ENCODE measurements at regions of chr21 and their contacts with region 1.

Region 1: DNA sequence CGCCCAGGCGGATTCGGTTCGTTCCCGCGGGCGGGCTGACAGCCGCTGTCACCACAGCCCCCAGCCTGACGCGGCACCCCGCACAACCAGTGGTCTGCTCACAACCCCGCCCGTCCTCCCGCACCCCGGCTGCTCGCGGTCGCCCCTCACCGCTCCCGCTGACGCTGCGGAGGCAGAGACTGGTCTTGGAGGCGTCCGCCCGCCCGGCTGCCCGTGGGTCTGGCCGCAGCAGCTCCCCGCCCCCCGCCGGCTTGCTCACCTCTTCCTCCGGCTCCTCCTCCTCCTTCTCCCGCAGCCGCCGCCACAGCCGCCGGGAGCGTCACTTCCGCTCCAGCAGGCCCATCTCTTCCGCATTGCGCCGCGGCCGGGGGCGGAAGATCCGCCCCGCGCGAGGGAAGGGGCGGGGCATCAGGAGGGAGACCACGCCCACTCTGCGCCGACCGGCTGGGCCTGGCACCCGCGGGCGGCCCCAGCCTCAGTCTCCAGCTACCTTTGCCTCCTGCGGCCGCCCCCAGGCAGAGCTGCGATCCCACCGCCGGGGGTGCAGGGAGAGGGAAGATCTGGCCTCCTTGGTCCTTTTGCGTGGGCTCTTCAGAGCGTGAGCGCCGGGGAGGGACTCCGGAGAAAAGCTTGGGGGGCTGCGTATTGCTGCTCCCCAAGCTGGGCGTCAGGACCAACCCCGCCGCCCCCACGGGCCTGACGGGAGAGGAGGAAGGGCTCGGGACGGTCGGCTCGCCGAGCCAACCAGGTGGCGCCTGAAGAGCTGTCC is at the start of gene SYNJ1:
- DNase-seq: peak; percentile 96
- H3K4me3 Mint-ChIP-seq: peak within 1 kb of the TSS; percentile 96
- H3K27ac Mint-ChIP-seq: peak within 1 kb of the TSS; percentile 96
- H3K4me1 Mint-ChIP-seq: peaks cover 39% of the 10 kb centered on the region
- H3K27me3 Mint-ChIP-seq: no peaks in the 10 kb centered on the region
- total RNA-seq, gene SYNJ1: 18.7 to 21.8 TPM

Region 2: DNA sequence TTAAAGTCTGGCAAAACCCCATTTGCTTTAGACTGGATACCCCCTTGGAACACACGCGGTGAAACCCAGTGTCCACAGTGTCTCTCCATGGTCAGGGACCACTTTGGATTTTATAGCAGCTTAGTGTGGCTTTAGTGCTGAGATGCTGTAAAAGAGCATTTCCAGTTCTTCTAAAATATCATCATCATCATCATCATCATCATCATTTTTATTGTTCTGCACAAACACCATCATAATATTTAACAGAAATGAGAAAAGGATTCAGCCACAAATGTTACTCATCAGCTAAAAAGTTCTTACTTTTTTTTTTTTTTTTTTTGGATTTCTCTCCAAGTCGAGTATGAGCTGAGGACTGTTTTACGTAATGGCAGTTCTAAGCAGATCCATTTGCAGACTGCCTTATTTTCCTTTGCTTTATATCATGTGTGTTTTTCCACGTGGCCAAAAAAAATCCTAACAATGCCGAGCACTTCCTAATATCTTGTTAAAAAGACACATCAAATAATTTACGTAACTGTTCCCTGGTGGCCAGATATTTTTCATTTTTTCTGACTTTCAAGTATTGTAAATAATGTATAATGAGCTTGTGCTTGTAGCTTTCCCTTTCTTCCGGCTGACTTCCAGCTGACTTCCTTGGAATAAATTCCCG is 252.6 kb before region 1 on chr21:
- CTCF ChIA-PET with region 1: no interaction called
- POLR2A ChIA-PET with region 1: no interaction called
- DNase-seq: no peak
- H3K4me3 Mint-ChIP-seq: no peak overlapping the region
- H3K27ac Mint-ChIP-seq: no peak overlapping the region
- H3K4me1 Mint-ChIP-seq: peaks cover 8% of the 10 kb centered on the region
- H3K27me3 Mint-ChIP-seq: no peaks in the 10 kb centered on the region

Region 3: GRCh38 chr21:32612075-32612998 is 115.5 kb before region 1 on chr21 and contains the start of gene CFAP298:
- CTCF ChIA-PET with region 1: interaction called, 3 read pairs
- POLR2A ChIA-PET with region 1: interaction called, 10 read pairs
- DNase-seq: peak; percentile 90
- H3K4me3 Mint-ChIP-seq: peak within 1 kb of the TSS; percentile 93
- H3K27ac Mint-ChIP-seq: peak within 1 kb of the TSS; percentile 85
- H3K4me1 Mint-ChIP-seq: peaks cover 27% of the 10 kb centered on the region
- H3K27me3 Mint-ChIP-seq: peaks cover 3% of the 10 kb centered on the region
- total RNA-seq, gene CFAP298: 34.0 to 34.7 TPM

Region 4: GRCh38 chr21:32682696-32683474 is 45.0 kb before region 1 on chr21:
- CTCF ChIA-PET with region 1: no interaction called
- POLR2A ChIA-PET with region 1: interaction called, 13 read pairs
- DNase-seq: no peak
- H3K4me3 Mint-ChIP-seq: no peak overlapping the region
- H3K27ac Mint-ChIP-seq: no peak overlapping the region
- H3K4me1 Mint-ChIP-seq: peaks cover 3% of the 10 kb centered on the region
- H3K27me3 Mint-ChIP-seq: no peaks in the 10 kb centered on the region

Region 5: DNA sequence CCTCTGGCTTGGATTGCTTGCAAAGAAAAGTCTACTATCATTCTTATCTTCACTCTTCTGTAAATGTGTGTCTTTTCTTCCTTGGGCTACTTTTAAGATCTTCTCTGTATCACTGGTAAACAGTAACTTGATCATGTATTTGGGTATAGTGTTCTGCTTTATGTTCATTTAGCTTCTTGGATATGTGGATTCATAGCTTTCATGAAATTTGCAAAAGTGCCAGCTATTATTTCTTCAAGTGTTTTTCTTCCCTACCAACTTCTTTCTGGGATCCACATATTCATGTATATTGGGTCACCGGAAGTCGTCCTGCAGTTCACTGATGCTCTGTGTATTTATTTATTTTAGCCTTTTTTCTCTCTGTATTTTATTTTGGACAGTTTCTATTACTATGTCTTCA is 11.4 kb before region 1 on chr21:
- CTCF ChIA-PET with region 1: interaction called, 4 read pairs
- POLR2A ChIA-PET with region 1: interaction called, 10 read pairs
- DNase-seq: no peak
- H3K4me3 Mint-ChIP-seq: no peak overlapping the region
- H3K27ac Mint-ChIP-seq: no peak overlapping the region
- H3K4me1 Mint-ChIP-seq: peaks cover 12% of the 10 kb centered on the region
- H3K27me3 Mint-ChIP-seq: no peaks in the 10 kb centered on the region

Region 6: GRCh38 chr21:32747396-32747795 is 19.5 kb after region 1 on chr21:
- CTCF ChIA-PET with region 1: interaction called, 8 read pairs
- POLR2A ChIA-PET with region 1: interaction called, 16 read pairs
- DNase-seq: no peak
- H3K4me3 Mint-ChIP-seq: no peak overlapping the region
- H3K27ac Mint-ChIP-seq: peak overlapping the region; percentile 44
- H3K4me1 Mint-ChIP-seq: peaks cover 12% of the 10 kb centered on the region
- H3K27me3 Mint-ChIP-seq: no peaks in the 10 kb centered on the region

Region 7: DNA sequence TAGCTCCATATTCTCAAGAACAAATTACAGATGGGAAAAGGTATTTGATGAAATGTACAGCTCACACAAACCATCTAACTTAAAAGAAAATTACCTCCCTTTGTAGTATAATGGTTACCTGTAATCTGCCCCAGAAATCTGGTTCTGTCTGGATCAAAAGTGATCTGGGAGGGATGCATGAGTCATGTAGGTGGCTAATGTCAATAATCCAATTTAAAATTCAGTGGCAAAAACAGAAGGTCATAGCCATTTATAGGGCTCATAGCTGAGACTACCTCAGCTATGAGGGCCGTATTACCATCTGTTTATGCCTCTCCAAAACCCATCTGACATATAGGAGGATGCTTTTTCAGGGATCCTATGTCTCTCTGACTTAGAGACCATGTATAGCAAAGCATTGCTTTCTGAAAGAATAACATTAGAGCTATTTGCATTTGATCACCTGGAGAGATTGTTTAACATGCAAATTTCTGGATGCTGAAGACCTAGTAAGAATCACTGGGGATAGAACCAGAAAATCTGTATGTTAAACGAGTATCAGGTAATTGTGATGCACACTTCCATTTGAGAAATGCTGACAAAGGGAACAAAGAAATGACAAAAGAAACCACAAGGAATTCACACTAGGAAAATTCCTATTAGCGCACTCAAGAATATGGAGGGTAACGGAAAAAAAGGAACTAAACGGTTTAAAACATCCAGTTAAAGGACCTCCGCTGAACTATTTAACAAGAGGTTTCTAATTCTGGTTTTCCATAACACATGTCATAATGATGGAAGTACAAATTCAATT is 26.1 kb after region 1 on chr21:
- CTCF ChIA-PET with region 1: interaction called, 3 read pairs
- POLR2A ChIA-PET with region 1: interaction called, 16 read pairs
- DNase-seq: no peak
- H3K4me3 Mint-ChIP-seq: no peak overlapping the region
- H3K27ac Mint-ChIP-seq: no peak overlapping the region
- H3K4me1 Mint-ChIP-seq: peaks cover 10% of the 10 kb centered on the region
- H3K27me3 Mint-ChIP-seq: no peaks in the 10 kb centered on the region

Region 8: GRCh38 chr21:32770871-32771523 is 43.1 kb after region 1 on chr21:
- CTCF ChIA-PET with region 1: interaction called, 20 read pairs
- POLR2A ChIA-PET with region 1: interaction called, 90 read pairs
- DNase-seq: peak; percentile 69
- H3K4me3 Mint-ChIP-seq: peak overlapping the region; percentile 97
- H3K27ac Mint-ChIP-seq: peak overlapping the region; percentile 85
- H3K4me1 Mint-ChIP-seq: peaks cover 57% of the 10 kb centered on the region
- H3K27me3 Mint-ChIP-seq: peaks cover 3% of the 10 kb centered on the region

Region 9: GRCh38 chr21:32886339-32886738 is 158.5 kb after region 1 on chr21:
- CTCF ChIA-PET with region 1: no interaction called
- POLR2A ChIA-PET with region 1: no interaction called
- DNase-seq: peak; percentile 42
- H3K4me3 Mint-ChIP-seq: peak overlapping the region; percentile 84
- H3K27ac Mint-ChIP-seq: peak overlapping the region; percentile 60
- H3K4me1 Mint-ChIP-seq: peaks cover 15% of the 10 kb centered on the region
- H3K27me3 Mint-ChIP-seq: peaks cover 16% of the 10 kb centered on the region